ENCODE measurements at regions of chr10 and their contacts with region 1.

Region 1: GRCh38 chr10:16843252-16843870 is 26.1 kb upstream of the RSU1 start:
- DNase-seq: peak; percentile 74
- H3K4me3 Mint-ChIP-seq: no peak overlapping the region
- H3K27ac Mint-ChIP-seq: no peak overlapping the region
- H3K4me1 Mint-ChIP-seq: no peaks in the 10 kb centered on the region
- H3K27me3 Mint-ChIP-seq: no peaks in the 10 kb centered on the region
- CTCF ChIP-seq: peak; percentile 61

Region 2: DNA sequence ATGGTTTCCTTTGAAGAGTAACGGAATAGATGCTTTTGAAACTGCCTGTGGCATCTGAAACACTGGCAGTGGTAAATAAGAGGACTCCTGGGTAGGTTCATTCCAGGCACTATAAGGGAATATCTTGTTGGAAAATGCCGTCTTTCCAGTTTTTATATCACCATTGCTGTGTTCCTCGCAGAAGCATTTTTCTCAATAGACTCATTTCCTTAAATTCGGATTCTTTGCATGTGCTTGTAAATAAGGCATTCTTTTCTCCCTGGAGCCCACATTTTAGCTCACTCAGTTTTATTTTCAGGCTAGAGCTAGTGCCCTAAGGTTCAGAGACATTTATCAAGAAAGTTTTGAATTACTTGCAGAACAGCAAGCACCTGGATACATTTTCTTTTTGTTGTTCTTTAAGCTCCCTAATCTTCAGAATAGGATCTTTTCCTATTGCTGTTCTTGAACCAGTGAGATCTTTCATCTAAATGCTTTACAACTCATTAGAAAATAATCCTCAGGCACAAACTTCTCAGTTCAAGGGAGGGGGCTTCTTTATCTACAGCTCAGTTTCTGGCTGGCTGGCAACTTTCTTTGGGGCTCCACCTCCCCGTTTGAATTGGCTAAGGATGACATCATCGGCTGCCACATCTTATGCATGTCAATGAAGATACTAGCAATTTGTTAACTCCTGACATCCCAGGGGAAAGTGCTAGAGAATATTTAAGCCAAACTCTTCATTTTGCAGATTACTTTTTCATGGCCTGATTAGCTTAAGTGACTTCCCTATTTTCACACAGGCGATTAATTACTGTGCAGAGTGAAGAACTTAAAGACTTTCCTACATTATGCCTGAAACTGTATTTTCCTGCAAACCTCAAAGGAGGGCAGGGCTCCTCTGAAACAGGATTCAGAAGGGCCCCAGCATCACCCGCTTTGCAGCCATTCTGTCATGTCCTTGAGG is 107.6 kb after region 1 on chr10:
- CTCF ChIA-PET with region 1: no interaction called
- POLR2A ChIA-PET with region 1: no interaction called
- intact Hi-C with region 1: no loop called
- DNase-seq: peak; percentile 33
- H3K4me3 Mint-ChIP-seq: no peak overlapping the region
- H3K27ac Mint-ChIP-seq: no peak overlapping the region
- H3K4me1 Mint-ChIP-seq: no peaks in the 10 kb centered on the region
- H3K27me3 Mint-ChIP-seq: no peaks in the 10 kb centered on the region
- CTCF ChIP-seq: no peak

Region 3: DNA sequence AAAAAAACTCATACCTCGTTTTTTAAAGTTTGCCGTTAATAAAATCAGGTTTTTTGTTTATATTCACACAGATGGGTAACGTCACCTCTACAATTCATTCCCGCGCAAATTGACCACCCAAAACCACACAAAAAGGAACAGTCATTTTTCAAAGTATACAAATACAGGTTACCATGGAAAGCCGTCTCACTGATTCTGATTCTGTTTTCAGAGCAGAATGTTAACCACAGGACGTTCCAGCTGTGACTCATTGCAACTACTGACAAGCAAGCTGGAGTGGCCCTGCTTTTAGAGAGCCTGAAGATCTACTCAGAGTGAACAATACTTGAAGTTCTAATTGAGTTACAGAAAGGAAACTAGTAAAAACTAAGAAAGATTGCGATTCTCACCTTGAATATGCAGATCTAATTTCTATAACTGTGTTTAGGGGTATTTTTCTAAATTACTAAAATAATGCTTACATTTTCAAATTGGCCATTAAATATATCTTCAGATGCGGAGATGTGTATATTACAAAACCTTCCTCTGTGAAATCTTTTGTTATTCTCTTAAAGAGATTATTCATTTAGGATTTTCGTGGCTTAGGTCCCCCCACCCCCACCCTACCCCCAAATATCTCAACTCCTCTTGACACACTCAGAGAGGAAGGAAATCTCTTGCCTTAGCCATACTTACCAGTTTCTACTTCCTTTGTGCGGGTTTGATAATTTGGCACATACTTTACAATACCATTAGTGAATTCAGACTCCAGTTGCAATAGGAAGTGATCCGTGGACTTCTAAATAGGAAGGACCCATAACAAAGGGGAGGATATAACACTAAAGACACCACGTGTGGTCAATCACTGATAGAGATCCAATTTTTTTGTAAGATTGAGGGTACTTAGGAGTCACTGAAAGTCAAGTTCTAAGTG is 180.3 kb after region 1 on chr10:
- CTCF ChIA-PET with region 1: no interaction called
- POLR2A ChIA-PET with region 1: no interaction called
- intact Hi-C with region 1: loop called (anchors 10 kb)
- DNase-seq: peak; percentile 90
- H3K4me3 Mint-ChIP-seq: peak overlapping the region; percentile 67
- H3K27ac Mint-ChIP-seq: peak overlapping the region; percentile 98
- H3K4me1 Mint-ChIP-seq: peaks cover 28% of the 10 kb centered on the region
- H3K27me3 Mint-ChIP-seq: no peaks in the 10 kb centered on the region
- CTCF ChIP-seq: no peak

Region 4: DNA sequence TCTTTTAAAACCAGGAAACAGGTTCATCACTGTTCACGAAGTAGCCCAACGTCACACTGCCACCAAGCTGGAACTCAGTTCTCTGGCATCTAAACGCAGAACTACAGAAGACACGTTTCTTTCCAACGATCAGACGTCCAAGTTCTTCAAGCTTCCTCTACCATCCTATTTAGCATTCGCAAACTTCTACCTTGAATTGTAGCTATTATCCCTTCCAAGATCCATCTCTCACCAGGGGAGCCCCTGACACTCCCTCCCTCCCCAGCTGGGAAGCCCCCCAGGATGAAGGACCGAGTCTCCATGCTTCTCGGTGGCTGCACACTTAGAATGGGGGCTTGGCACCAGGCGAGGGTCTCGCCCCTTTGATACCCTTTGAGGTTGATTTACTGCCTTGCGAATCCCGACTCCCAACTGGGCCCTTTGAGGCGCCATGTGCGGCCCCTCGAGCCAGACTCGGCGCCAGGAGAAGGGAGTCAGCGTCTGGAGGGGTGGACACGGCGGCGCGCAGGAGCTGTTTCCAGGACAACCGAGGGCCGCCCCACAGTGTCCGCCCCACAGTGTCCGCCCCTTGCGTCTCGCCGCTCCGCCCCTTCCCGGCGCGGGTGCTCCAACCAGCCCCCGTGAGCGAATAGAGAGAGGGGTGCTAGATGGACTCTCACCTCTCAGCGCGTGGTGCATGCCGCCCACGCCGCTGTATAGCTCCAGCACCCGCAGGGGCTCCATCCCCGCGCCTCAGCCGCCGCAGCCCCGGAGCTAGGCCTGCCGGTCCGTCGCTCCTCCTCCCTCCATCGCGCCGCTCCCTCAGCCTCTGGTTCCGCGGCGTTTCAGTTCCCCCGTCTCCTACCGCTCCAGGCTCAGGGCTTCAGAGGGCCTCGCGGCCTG is 357.8 kb after region 1 on chr10 and contains the start of gene TRDMT1:
- CTCF ChIA-PET with region 1: interaction called, 8 read pairs
- POLR2A ChIA-PET with region 1: interaction called, 19 read pairs
- intact Hi-C with region 1: loop called (anchors 1 kb)
- DNase-seq: peak; percentile 89
- H3K4me3 Mint-ChIP-seq: peak within 1 kb of the TSS; percentile 90
- H3K27ac Mint-ChIP-seq: peak within 1 kb of the TSS; percentile 88
- H3K4me1 Mint-ChIP-seq: peaks cover 29% of the 10 kb centered on the region
- H3K27me3 Mint-ChIP-seq: no peaks in the 10 kb centered on the region
- CTCF ChIP-seq: no peak
- total RNA-seq, gene TRDMT1: 5.4 and 8.7 TPM in 2 replicates

Region 5: DNA sequence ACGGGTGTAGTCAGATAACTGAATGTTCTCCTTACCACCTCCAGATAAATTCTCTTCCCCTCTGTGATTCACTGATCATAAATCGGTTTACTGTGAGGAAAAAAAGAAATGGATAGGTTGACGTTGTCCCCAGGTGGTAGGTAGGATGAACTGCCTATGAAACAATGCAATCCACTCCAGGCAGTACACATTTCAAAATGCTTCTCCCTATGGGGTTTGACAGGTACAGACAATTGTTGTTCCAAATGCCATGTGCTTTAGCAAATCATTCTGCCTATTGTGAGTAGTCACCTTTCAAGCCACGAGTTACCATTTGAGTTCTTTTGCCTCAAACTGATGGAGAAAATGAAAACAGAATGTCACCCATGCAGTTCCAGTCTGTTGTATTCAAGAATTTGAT is 406.5 kb after region 1 on chr10:
- CTCF ChIA-PET with region 1: interaction called, 12 read pairs
- POLR2A ChIA-PET with region 1: no interaction called
- intact Hi-C with region 1: loop called (anchors 1 kb)
- DNase-seq: no peak
- H3K4me3 Mint-ChIP-seq: no peak overlapping the region
- H3K27ac Mint-ChIP-seq: no peak overlapping the region
- H3K4me1 Mint-ChIP-seq: peaks cover 5% of the 10 kb centered on the region
- H3K27me3 Mint-ChIP-seq: no peaks in the 10 kb centered on the region
- CTCF ChIP-seq: peak; percentile 41

Region 6: GRCh38 chr10:17430647-17431355 is 587.4 kb after region 1 on chr10:
- CTCF ChIA-PET with region 1: interaction called, 11 read pairs
- POLR2A ChIA-PET with region 1: no interaction called
- intact Hi-C with region 1: loop called (anchors 2 kb)
- DNase-seq: peak; percentile 78
- H3K4me3 Mint-ChIP-seq: no peak overlapping the region
- H3K27ac Mint-ChIP-seq: no peak overlapping the region
- H3K4me1 Mint-ChIP-seq: peaks cover 5% of the 10 kb centered on the region
- H3K27me3 Mint-ChIP-seq: no peaks in the 10 kb centered on the region
- CTCF ChIP-seq: peak; percentile 81